ENCODE measurements at regions of chr4 and their contacts with region 1.

Region 1: DNA sequence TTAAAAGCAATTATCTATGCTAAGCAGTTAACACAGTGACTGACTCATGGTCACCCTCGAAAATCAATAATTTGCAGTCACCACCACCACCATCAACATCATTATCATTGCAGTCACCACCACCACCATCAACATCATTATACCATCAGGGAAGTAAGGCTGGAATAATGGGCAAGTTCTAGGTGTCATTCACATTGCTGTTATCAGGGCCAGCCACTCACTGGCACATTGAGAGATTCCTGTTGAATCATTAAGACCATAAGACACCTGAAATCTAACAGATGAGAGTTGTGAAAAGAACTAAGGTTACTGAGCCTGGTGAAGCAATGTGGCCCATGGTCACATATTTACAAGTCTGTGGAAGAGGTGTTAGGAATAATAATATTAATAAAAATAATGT is 247.7 kb upstream of the BOD1L1 start:
- DNase-seq: no peak
- H3K4me3 ChIP-seq: no peak overlapping the region
- H3K27ac ChIP-seq: no peak overlapping the region
- H3K4me1 ChIP-seq: no peaks in the 10 kb centered on the region
- H3K27me3 ChIP-seq: no peaks in the 10 kb centered on the region
- CTCF ChIP-seq: no peak
- EP300 ChIP-seq: no peak
- POLR2A ChIP-seq: no peak

Region 2: GRCh38 chr4:13892739-13893105 is 17.5 kb after region 1 on chr4:
- intact Hi-C with region 1: loop called in 1 of 4 experiments (anchors 1 kb)
- DNase-seq: no peak
- H3K4me3 ChIP-seq: no peak overlapping the region
- H3K27ac ChIP-seq: no peak overlapping the region
- H3K4me1 ChIP-seq: no peaks in the 10 kb centered on the region
- H3K27me3 ChIP-seq: no peaks in the 10 kb centered on the region
- CTCF ChIP-seq: no peak
- EP300 ChIP-seq: no peak
- POLR2A ChIP-seq: no peak

Region 3: DNA sequence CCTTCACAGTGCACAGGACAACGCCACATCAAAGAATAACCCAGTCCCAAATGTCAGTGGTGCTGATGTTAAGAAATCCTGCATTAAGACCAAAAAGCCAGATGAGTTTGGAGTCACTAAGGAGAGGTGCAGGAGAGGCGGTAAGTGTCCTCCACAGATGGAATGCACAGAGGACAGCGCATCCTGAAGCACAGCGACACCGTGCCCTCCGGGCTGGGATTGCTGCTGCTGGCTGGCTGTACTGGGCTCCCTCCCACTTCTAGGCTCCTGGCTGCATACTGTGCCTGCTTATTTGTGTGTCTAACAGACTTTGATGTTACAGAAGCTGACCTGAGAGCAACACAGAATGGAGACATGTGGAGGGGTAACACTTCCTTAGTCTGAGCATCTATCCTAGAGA is 77.9 kb after region 1 on chr4:
- intact Hi-C with region 1: no loop called
- DNase-seq: no peak
- H3K4me3 ChIP-seq: no peak overlapping the region
- H3K27ac ChIP-seq: no peak overlapping the region
- H3K4me1 ChIP-seq: no peaks in the 10 kb centered on the region
- H3K27me3 ChIP-seq: no peaks in the 10 kb centered on the region
- CTCF ChIP-seq: no peak
- EP300 ChIP-seq: no peak
- POLR2A ChIP-seq: no peak

Measured in ovary (tissue), 10 donors.